Activated CD8-positive, alpha-beta T cell treated with anti-CD3 and anti-CD28 coated beads for 36 hours (primary cell): ENCODE measurements at regions of chr14 and their contacts with region 1.

Region 1: DNA sequence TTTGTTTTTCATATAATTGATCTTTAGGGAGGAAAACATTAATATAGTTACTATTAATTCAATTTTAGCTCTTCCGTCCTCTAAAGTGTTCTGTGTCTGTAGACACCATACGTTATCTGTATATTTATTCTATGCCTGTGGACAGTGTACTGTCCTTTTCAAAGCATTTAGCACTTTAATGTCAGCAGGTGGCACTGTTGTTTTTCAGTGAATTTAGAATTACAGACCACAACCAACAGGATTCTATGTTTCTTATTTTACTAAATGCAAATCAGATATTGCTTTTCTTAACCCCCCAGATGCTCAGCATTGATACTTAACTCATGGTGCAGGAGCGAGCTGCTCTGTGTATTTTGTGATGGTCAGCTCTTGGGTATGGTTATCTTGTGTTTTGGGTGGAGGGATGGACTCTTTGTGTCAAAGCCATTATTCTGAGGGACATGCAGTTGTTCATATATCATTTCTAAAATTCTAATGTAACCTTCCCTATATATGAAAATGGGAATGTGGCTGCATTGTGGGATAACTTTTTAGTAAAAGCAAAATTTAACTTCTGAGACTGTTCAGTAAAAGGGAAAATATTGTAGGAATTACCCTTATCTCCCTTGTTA is 65.2 kb downstream of the PAPOLA start:
- DNase-seq: no peak
- ATAC-seq: peak; percentile 37
- H3K4me3 Mint-ChIP-seq: no peak overlapping the region
- H3K27ac Mint-ChIP-seq: no peak overlapping the region
- H3K4me1 Mint-ChIP-seq: no peaks in the 10 kb centered on the region
- H3K27me3 Mint-ChIP-seq: no peaks in the 10 kb centered on the region
- CTCF ChIP-seq: peak; percentile 50

Region 2: GRCh38 chr14:96349286-96350075 is 217.9 kb before region 1 on chr14:
- CTCF ChIA-PET with region 1: no interaction called
- POLR2A ChIA-PET with region 1: no interaction called
- intact Hi-C with region 1: no loop called
- DNase-seq: peak; percentile 6
- ATAC-seq: peak; percentile 58
- H3K4me3 Mint-ChIP-seq: no peak overlapping the region
- H3K27ac Mint-ChIP-seq: peak overlapping the region; percentile 6
- H3K4me1 Mint-ChIP-seq: peaks cover 24% of the 10 kb centered on the region
- H3K27me3 Mint-ChIP-seq: no peaks in the 10 kb centered on the region
- CTCF ChIP-seq: no peak

Region 3: GRCh38 chr14:96411555-96411954 is 155.8 kb before region 1 on chr14:
- CTCF ChIA-PET with region 1: no interaction called
- POLR2A ChIA-PET with region 1: no interaction called
- intact Hi-C with region 1: no loop called
- DNase-seq: no peak
- ATAC-seq: no peak
- H3K4me3 Mint-ChIP-seq: no peak overlapping the region
- H3K27ac Mint-ChIP-seq: no peak overlapping the region
- H3K4me1 Mint-ChIP-seq: no peaks in the 10 kb centered on the region
- H3K27me3 Mint-ChIP-seq: peaks cover 1% of the 10 kb centered on the region
- CTCF ChIP-seq: no peak

Region 4: DNA sequence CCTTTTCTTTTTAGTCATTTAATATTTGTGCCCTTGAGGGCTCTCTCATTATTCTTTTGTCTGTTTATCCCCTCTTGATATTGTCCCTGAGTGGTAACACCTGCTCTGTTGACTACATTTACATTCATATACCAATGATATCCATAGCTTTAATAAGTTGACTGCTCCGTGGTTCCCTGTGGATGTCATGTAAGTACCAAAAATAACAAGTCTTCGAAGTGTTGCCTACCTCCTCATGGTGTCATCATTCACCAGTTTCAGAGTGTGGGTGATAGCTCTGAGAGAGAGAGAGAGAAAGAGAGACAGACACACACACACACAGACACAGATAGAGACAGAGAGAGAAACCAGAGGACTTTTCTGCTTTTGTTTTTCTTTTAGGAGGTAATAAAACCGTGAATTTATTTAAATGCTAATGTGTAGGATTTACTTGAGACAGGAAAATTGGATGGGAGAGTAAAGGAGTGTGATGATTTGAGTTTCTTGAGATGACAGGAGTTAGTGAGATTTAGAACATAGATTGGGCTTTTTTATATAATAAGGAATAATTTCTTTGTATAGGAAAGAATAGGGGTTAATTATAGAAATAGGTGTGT is 13.0 kb before region 1 on chr14:
- CTCF ChIA-PET with region 1: interaction called, 11 read pairs
- POLR2A ChIA-PET with region 1: interaction called, 3 read pairs
- intact Hi-C with region 1: no loop called
- DNase-seq: no peak
- ATAC-seq: peak; percentile 74
- H3K4me3 Mint-ChIP-seq: no peak overlapping the region
- H3K27ac Mint-ChIP-seq: peak overlapping the region; percentile 75
- H3K4me1 Mint-ChIP-seq: peaks cover 12% of the 10 kb centered on the region
- H3K27me3 Mint-ChIP-seq: no peaks in the 10 kb centered on the region
- CTCF ChIP-seq: no peak